Dorsolateral prefrontal cortex (tissue), 120 donors: ENCODE measurements at regions of chr6 and their contacts with region 1.

Region 1: DNA sequence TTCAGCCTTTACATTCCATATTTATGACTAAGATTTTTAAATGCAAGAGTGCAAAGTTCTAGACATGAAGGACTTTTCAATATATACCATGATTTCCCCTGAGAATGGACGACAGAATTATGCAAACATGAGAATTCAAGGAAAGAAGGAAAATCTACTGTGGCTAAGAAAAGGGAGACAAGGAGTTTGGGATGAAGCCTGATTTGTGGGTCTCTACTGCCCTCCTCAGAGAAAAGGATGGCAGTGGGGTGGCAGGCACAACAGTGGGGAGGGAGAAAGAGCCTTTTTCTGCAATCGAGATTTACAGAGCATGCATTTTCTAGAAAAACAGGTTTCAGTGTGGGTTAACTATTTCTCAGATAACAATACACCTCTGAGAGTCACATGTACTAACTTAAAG is 466.9 kb upstream of the NRSN1 start:
- DNase-seq: peak in 3 of 10 donors; percentile 39 to 54 (median 51)
- H3K4me3 ChIP-seq: no peak overlapping the region
- H3K27ac ChIP-seq: no peak overlapping the region
- H3K27me3 ChIP-seq: no peaks in the 10 kb centered on the region
- CTCF ChIP-seq: peak; percentile 41 to 82 (median 68)

Region 2: GRCh38 chr6:23027281-23027680 is 631.8 kb before region 1 on chr6:
- intact Hi-C with region 1: loop called in 1 of 2 experiments (anchors 5 kb)
- DNase-seq: peak in 5 of 10 donors; percentile 19 to 66 (median 55)
- H3K4me3 ChIP-seq: peak overlapping the region in 8 of 59 donors; percentile 1 to 36 (median 6)
- H3K27ac ChIP-seq: peak overlapping the region in 57 of 59 donors; percentile 40 to 97 (median 86)
- H3K27me3 ChIP-seq: no peaks in the 10 kb centered on the region
- CTCF ChIP-seq: peak in 5 of 56 donors; percentile 6 to 24 (median 7)

Region 3: DNA sequence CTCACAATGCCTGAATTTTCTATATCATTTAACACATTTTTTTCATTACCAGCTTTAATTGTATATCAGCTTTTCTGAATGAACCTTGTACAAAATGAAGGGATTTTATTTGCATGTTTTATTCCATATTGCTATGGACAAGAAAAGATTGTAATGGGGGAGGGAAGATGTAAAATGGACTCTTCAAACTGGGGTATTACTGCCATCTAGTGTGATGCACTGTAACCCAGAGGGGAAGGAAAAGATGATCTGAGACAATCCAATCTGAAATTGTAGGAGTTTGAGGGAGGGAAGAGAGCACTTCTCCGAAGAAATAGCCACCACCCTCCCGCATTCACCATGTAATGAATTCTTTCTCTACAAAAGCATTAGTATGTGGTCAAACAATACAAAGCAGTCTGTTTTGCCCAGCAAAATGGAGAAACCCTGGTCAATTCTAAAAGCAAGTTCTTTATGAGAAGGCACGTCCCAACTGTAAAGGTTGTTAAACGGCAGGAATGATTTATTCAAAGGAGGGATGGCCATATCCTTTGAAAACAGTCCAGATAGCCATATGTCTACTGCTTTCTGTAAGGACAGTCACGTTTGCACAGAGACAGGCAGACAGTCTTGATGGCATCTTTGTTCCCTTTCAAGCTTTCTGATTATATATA is 212.6 kb before region 1 on chr6:
- intact Hi-C with region 1: loop called (anchors 2 to 10 kb)
- DNase-seq: peak in 1 of 10 donors; percentile 17
- H3K4me3 ChIP-seq: peak overlapping the region in 36 of 59 donors; percentile 2 to 53 (median 30)
- H3K27ac ChIP-seq: peak overlapping the region in 5 of 59 donors; percentile 8 to 49 (median 29)
- H3K27me3 ChIP-seq: no peaks in the 10 kb centered on the region
- CTCF ChIP-seq: peak; percentile 37 to 87 (median 72)

Region 4: GRCh38 chr6:23547701-23548161 is 111.4 kb before region 1 on chr6:
- intact Hi-C with region 1: loop called in 1 of 2 experiments (anchors 10 kb)
- DNase-seq: no peak
- H3K4me3 ChIP-seq: no peak overlapping the region
- H3K27ac ChIP-seq: no peak overlapping the region
- H3K27me3 ChIP-seq: no peaks in the 10 kb centered on the region
- CTCF ChIP-seq: peak in 18 of 56 donors; percentile 10 to 35 (median 22)

Region 5: DNA sequence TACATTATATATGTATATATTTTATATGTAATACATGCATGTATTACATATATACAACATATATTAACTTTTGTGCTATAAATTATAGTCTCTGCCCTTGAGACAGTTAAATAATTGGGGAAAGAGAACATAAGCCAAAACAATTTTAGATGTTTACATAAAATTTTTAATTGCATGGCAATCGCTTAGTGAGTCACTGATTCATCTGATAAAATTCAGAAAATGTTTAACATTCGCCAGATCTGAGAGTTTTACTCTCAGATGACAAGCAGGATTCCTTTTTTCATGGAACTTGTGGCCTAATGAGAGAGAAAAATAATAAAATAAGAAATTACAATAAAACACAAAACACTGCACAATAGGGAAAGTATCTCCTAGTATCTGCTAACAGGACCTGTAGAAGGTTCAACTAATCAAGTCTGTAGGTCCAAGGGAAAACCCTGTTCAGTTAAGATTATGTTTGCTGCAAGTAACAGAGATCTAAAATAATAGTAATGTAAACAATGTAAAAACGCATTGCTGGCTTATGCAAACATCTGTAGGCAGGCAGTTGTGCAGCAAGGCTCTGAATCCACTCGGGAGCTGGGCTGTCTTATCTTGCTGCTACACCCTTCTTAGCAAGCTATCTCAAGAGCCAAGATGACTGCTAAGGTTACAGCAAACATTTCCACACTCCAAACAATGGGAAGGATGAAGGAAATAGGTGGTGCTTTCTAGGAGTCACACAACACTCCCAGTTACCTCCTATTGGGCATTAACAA is 69.4 kb after region 1 on chr6:
- intact Hi-C with region 1: no loop called
- DNase-seq: no peak
- H3K4me3 ChIP-seq: no peak overlapping the region
- H3K27ac ChIP-seq: no peak overlapping the region
- H3K27me3 ChIP-seq: no peaks in the 10 kb centered on the region
- CTCF ChIP-seq: no peak

Region 6: DNA sequence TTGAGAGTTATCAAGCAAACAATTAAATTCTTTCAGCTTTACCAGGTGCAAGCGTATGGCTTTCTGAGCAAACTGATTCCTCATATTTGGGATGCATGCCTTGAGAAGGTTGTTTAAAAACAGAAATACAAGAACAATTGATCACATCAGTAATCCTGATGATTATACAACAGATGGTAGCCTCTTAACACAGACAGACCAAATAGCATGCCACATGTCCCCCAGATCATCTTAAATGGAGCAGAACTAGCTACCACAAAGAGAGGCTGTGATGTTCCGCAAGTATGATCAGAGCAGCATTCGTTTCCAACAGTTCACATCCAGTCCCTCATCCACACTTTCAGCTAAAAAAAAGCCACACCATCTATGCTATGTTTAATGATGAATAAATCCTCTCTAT is 220.7 kb after region 1 on chr6:
- intact Hi-C with region 1: no loop called
- DNase-seq: no peak
- H3K4me3 ChIP-seq: no peak overlapping the region
- H3K27ac ChIP-seq: no peak overlapping the region
- H3K27me3 ChIP-seq: peaks cover 0 to 9% (median 0%) of the 10 kb centered on the region in 45 donors
- CTCF ChIP-seq: no peak

Region 7: DNA sequence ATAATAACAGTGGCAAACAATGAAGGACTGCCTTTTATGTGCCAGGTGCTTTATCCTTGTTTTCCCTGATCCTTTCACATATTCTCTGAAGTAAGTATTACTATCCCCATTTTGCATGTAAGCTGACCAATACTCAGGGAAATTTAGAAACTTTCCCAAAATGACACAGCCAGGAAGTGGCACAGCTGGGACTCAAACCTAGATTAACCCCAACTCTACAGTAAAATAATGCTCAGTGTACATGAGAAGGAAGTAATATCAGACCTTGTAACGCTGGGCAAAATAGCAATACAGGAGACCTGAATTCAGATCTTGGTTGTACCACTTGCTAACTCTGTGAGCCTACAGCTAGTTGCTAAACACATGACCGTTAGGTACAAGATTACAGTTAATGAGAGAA is 440.1 kb after region 1 on chr6:
- intact Hi-C with region 1: no loop called
- DNase-seq: no peak
- H3K4me3 ChIP-seq: no peak overlapping the region
- H3K27ac ChIP-seq: no peak overlapping the region
- H3K27me3 ChIP-seq: peaks cover 0 to 29% (median 0%) of the 10 kb centered on the region in 45 donors
- CTCF ChIP-seq: no peak